ENCODE measurements at regions of chr18 and their contacts with region 1.

Region 1: DNA sequence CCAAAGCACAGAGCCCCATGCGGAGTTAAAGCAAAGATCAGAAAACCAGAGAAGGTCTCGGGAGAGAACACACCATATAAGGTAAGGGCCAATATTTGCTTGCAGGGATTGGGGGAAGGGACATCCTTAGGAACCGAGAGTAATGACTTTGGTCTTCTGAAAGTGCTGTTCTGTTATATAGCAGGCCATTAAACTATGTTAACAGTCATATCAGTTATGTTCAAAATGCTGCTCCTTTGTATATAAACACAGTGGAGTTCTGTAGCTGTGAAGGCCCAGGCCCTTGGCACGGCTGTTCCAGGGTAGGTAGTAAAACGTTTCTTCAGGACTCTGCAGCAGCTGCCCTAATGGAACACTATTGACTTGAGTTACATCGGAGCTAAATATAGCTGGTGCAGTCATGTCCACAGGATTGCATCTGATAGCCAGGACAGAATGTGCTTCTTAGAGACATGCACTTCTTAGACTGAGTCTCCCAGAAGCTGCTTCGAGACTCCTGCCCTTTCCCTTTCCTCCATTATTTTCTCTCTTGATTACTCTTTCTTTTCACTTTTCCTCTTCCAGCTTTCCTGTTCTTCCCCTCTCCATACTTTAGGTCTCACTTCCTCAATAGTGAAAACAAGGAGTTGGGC is 122.4 kb downstream of the SETBP1 start:
- DNase-seq: peak in 1 of 2 donors; percentile 86
- H3K4me3 ChIP-seq: peak overlapping the region in 1 of 2 donors; percentile 5
- H3K27ac ChIP-seq: peak overlapping the region; percentile 87 to 90
- H3K4me1 ChIP-seq: peaks cover 5 to 38% of the 10 kb centered on the region in 2 donors
- H3K27me3 ChIP-seq: no peaks in the 10 kb centered on the region
- CTCF ChIP-seq: no peak

Region 2: GRCh38 chr18:44325903-44326635 is 477.1 kb before region 1 on chr18:
- intact Hi-C with region 1: no loop called
- DNase-seq: no peak
- H3K4me3 ChIP-seq: no peak overlapping the region
- H3K27ac ChIP-seq: no peak overlapping the region
- H3K4me1 ChIP-seq: no peaks in the 10 kb centered on the region
- H3K27me3 ChIP-seq: no peaks in the 10 kb centered on the region
- CTCF ChIP-seq: peak in 2 of 3 experiments; percentile 10 to 22

Region 3: GRCh38 chr18:44818668-44819403 is 15.7 kb after region 1 on chr18:
- intact Hi-C with region 1: loop called (anchors 1 kb)
- DNase-seq: no peak
- H3K4me3 ChIP-seq: no peak overlapping the region
- H3K27ac ChIP-seq: peak overlapping the region in 1 of 2 donors; percentile 21
- H3K4me1 ChIP-seq: peaks cover 0 to 18% of the 10 kb centered on the region in 2 donors
- H3K27me3 ChIP-seq: no peaks in the 10 kb centered on the region
- CTCF ChIP-seq: no peak

Region 4: GRCh38 chr18:44826418-44827259 is 23.5 kb after region 1 on chr18:
- intact Hi-C with region 1: loop called (anchors 2 kb)
- DNase-seq: peak; percentile 15 to 85
- H3K4me3 ChIP-seq: no peak overlapping the region
- H3K27ac ChIP-seq: peak overlapping the region; percentile 73 to 83
- H3K4me1 ChIP-seq: peaks cover 6 to 22% of the 10 kb centered on the region in 2 donors
- H3K27me3 ChIP-seq: no peaks in the 10 kb centered on the region
- CTCF ChIP-seq: no peak

Region 5: DNA sequence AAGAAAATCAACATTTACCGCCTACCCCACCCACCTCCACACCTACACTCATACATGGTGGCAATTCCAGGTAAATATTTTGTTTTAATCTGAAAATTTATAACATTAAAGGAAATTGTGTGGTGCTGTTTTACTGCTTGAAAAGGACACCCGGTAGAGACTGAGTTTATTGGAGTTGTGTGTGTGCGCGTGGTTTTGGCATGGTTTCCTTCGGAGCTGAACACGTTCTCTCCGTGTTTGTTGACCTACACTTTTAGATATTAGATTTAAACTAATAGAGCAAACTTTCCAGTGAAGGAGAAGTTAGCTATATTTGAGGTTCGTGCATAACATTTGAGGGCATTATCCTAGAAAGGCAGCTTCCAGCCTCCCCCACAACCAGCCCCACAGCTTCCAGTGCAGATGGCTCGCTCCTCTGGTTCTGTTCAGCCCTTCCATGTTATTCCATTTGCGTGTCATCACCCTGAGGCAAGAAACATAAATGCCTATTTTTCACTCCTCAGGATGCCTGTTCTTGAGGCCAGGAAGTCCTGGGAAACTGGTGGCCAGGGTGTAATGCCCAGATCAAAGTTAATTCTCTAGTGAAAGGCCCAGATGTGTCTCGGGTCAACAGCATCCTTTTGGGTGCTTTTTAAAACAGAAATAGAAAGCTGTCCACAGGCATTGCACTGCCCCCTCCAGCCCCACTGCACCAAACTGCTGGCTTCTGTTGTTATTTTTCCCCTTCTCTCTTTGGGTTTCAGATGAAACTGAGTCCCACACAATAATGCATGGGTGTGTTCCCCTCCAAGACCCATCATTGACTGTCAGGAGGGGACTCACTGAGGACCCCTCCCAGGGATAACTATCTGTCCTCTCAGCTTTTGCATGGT is 67.7 kb after region 1 on chr18:
- intact Hi-C with region 1: loop called (anchors 2 kb)
- DNase-seq: no peak
- H3K4me3 ChIP-seq: no peak overlapping the region
- H3K27ac ChIP-seq: no peak overlapping the region
- H3K4me1 ChIP-seq: peaks cover 0 to 8% of the 10 kb centered on the region in 2 donors
- H3K27me3 ChIP-seq: no peaks in the 10 kb centered on the region
- CTCF ChIP-seq: no peak

Region 6: DNA sequence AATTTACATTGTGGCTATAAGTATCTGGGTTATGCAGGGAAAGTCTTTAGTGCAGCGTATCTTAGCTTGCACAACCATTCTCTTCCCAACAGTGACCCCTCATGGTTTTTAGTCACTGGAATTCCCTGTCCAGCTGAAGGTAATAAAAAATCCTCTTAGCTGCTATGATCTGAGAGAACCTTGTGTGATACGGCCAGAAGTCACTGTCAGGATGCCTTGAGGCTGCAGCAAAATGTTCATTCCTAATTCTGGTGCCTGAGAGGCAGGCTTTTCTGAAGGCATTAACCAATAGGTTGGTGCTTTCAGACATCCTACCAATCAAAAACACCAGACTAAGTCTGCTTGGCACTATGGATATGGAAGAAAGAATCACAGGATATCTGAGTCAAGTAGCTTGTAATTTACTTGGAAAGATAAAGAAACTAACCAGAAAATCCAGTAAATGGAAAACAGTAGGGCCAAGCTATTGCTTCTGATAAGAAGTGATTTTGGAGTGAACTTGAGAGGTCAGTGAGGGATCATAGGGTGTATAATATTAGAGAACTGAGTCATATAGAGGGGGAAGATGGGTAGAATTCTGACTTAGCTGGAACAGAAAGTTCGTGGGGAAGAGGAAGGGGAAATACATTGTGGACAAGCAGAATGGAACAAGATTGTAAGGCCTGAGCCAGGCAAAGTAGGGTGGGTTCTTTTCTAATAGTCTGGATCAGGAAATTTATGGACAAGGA is 723.1 kb after region 1 on chr18:
- intact Hi-C with region 1: loop called (anchors 5 kb)
- DNase-seq: no peak
- H3K4me3 ChIP-seq: no peak overlapping the region
- H3K27ac ChIP-seq: peak overlapping the region; percentile 16 to 53
- H3K4me1 ChIP-seq: peaks cover 10 to 28% of the 10 kb centered on the region in 2 donors
- H3K27me3 ChIP-seq: no peaks in the 10 kb centered on the region
- CTCF ChIP-seq: peak in 1 of 3 experiments; percentile 36

Region 7: DNA sequence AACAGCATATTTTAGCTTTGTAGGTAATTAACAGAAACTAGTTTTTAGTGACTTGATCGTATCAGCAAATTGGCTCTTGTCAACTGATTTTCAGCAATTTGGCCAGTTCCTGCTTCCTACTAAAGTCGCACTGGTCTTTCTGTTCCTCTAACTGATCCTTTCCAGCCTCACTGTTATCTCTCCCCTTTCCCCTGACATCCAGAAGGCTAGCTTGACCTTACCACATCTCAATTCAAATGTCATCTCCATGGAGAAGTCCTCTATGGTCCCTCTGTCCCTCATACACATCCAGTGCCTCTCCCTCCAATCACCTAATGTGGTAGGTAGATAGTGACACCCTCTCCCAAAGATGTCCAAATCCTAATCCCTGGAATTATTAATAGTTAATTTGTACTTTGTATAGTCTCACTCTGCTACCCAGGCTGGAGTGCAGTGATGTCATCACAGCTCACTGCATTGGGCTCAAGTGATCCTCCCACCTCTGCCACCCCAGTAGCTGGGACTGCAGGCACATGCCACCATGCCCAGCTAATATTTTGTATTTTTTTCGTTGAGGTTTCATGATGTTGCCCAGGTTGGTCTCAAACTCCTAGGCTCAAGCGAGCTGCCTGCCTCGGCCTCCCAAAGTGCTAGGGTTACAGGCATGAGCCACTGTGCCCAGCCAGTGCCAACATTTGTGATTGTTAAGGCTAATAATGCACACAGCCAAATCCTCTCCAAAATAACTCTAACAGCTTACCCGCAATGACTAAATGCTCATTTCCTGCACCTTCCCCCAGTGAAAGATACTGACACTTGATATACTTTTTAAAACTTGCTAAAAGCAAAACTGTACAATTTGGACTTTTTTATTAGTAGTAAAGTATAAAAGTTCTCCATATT is 1252.1 kb after region 1 on chr18:
- intact Hi-C with region 1: no loop called
- DNase-seq: no peak
- H3K4me3 ChIP-seq: no peak overlapping the region
- H3K27ac ChIP-seq: no peak overlapping the region
- H3K4me1 ChIP-seq: peaks cover 0 to 7% of the 10 kb centered on the region in 2 donors
- H3K27me3 ChIP-seq: no peaks in the 10 kb centered on the region
- CTCF ChIP-seq: no peak

Measured in ascending aorta (tissue), 2 donors.